WTC11 (cell line): ENCODE measurements at regions of chr19 and their contacts with region 1.

Region 1: GRCh38 chr19:984165-984967 is at the start of gene WDR18:
- DNase-seq: peak; percentile 91
- ATAC-seq: peak; percentile 54
- H3K4me3 Mint-ChIP-seq: peak within 1 kb of the TSS; percentile 92
- H3K27ac Mint-ChIP-seq: peak within 1 kb of the TSS; percentile 96
- H3K4me1 Mint-ChIP-seq: peaks cover 16% of the 10 kb centered on the region
- H3K27me3 Mint-ChIP-seq: no peaks in the 10 kb centered on the region
- CTCF ChIP-seq: no peak
- total RNA-seq, gene WDR18: 140 to 147 TPM (median 146 TPM) in 3 replicates

Region 2: GRCh38 chr19:920051-920864 is 64.1 kb before region 1 on chr19:
- CTCF ChIA-PET with region 1: interaction called, 24 read pairs
- POLR2A ChIA-PET with region 1: interaction called, 6 read pairs
- DNase-seq: peak; percentile 53
- ATAC-seq: no peak
- H3K4me3 Mint-ChIP-seq: peak overlapping the region; percentile 69
- H3K27ac Mint-ChIP-seq: no peak overlapping the region
- H3K4me1 Mint-ChIP-seq: peaks cover 14% of the 10 kb centered on the region
- H3K27me3 Mint-ChIP-seq: peaks cover 59% of the 10 kb centered on the region
- CTCF ChIP-seq: no peak

Region 3: DNA sequence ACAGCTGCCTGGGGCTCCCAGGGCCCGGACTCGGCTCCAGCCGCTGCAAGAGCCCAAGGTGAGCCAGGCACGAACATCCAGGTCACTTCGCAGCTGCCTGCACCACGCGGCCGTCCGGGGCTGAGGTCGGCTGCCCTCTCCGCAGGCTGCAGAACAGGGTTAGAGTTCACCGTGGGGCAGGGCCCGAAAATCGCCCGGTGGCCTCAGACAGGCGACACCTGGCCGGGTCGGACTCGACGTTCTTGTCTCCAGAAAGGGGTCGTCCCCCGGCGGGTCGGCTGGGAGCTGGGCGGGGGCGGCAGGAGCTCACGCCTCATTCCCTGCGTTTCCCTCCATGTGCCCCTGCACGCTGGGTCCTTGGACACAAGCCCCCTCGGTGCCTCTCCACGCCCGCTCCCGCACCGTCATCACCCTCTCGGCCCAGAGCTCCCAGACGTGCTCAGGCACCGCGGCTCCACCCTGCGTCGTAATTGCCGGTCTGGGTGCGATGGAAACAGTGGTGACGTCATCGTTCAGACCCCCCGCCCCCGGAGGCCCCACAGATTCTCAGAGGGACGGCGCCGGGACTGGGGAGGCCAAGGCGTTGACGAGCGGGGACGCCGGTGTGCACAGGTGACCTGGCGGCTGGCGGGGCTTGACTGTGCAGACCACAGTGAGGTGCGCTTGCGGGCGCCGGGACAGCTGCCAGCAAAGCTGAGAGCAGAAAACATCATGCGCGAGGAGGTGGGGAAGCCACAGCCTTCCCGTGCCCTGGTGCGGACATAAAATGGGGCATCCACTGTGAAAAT is 11.9 kb after region 1 on chr19:
- CTCF ChIA-PET with region 1: interaction called, 20 read pairs
- POLR2A ChIA-PET with region 1: no interaction called
- DNase-seq: peak; percentile 67
- ATAC-seq: peak; percentile 8
- H3K4me3 Mint-ChIP-seq: peak overlapping the region; percentile 57
- H3K27ac Mint-ChIP-seq: no peak overlapping the region
- H3K4me1 Mint-ChIP-seq: peaks cover 5% of the 10 kb centered on the region; the same call in 1 of the 2 replicates
- H3K27me3 Mint-ChIP-seq: peaks cover 39% of the 10 kb centered on the region
- CTCF ChIP-seq: no peak